ENCODE measurements at regions of chr9 and their contacts with region 1.

Region 1: GRCh38 chr9:109683521-109683920 is 96.5 kb upstream of the PALM2AKAP2 start:
- DNase-seq: no peak
- H3K4me3 Mint-ChIP-seq: no peak overlapping the region
- H3K27ac Mint-ChIP-seq: no peak overlapping the region
- H3K4me1 Mint-ChIP-seq: no peaks in the 10 kb centered on the region
- H3K27me3 Mint-ChIP-seq: peaks cover 2% of the 10 kb centered on the region

Region 2: GRCh38 chr9:109627041-109627440 is 56.5 kb before region 1 on chr9:
- intact Hi-C with region 1: loop called (anchors 10 kb)
- DNase-seq: no peak
- H3K4me3 Mint-ChIP-seq: no peak overlapping the region
- H3K27ac Mint-ChIP-seq: no peak overlapping the region
- H3K4me1 Mint-ChIP-seq: no peaks in the 10 kb centered on the region
- H3K27me3 Mint-ChIP-seq: peaks cover 11% of the 10 kb centered on the region

Region 3: GRCh38 chr9:109699019-109699418 is 15.5 kb after region 1 on chr9:
- intact Hi-C with region 1: no loop called
- DNase-seq: no peak
- H3K4me3 Mint-ChIP-seq: no peak overlapping the region
- H3K27ac Mint-ChIP-seq: no peak overlapping the region
- H3K4me1 Mint-ChIP-seq: no peaks in the 10 kb centered on the region
- H3K27me3 Mint-ChIP-seq: peaks cover 10% of the 10 kb centered on the region

Measured in activated CD4-positive, alpha-beta T cell treated with anti-CD3 and anti-CD28 coated beads, Interleukin-2, amount 10 ng/mL, durations not matched to agents 24 days and 14 days (primary cell).